Activated CD4-positive, alpha-beta memory T cell treated with anti-CD3 and anti-CD28 coated beads for 36 hours (primary cell): ENCODE measurements at regions of chr1 and their contacts with region 1.

Region 1: GRCh38 chr1:224182866-224183590 is at the start of gene DEGS1:
- DNase-seq: peak; percentile 86
- H3K4me3 Mint-ChIP-seq: peak within 1 kb of the TSS; percentile 81
- H3K27ac Mint-ChIP-seq: peak within 1 kb of the TSS; percentile 90
- H3K4me1 Mint-ChIP-seq: peaks cover 45% of the 10 kb centered on the region
- H3K27me3 Mint-ChIP-seq: no peaks in the 10 kb centered on the region
- total RNA-seq, gene DEGS1: 27.9 to 28.4 TPM

Region 2: DNA sequence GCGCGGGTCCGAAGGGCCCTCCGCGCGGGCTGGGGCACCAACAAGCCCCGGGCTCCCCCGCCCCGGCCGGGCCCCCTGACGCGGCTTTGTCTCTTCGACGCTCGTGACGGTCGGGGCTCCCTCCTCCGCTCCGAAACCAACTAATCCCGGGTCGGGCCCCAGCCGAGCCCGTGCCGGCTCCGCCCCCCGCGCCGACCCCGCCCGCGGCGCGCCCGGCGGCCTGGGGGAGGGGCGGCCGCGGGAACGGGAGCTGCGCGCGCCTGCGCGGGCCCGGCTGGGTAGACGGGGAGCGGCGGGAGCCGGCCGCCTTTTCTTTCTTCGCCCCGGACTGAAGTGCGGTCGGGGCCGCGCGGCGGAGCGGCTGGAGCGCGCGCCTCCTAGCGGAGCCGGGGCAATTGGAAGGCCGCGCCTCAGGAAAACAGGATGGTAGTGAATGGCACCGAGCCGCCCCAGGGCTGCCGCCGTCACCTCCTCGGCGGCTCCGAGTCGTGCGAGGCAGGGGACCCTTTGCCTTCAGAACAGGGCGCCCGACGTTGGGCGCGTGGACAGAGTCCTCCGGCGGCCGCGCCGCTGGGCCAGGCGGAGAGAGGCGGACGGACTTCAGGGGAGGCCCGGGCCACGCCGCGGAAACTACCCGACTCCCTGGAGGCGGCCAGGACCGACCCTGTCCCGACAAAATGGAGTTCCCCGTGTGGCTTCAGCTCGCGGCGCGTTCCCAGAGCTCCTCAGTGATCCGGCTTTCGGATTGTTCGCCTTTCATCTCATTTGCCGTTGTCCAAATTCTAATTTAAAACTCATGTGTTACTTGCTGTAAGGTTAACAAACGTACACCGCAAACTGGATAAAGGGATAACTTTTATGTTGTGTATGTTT is 337.0 kb before region 1 on chr1 and contains the start of gene TP53BP2:
- CTCF ChIA-PET with region 1: no interaction called
- POLR2A ChIA-PET with region 1: interaction called, 3 read pairs
- intact Hi-C with region 1: loop called (anchors 5 kb)
- DNase-seq: peak; percentile 88
- H3K4me3 Mint-ChIP-seq: peak within 1 kb of the TSS; percentile 98
- H3K27ac Mint-ChIP-seq: peak within 1 kb of the TSS; percentile 100
- H3K4me1 Mint-ChIP-seq: peaks cover 45% of the 10 kb centered on the region
- H3K27me3 Mint-ChIP-seq: no peaks in the 10 kb centered on the region
- total RNA-seq, gene TP53BP2: 56.0 to 58.7 TPM

Region 3: GRCh38 chr1:224042557-224043118 is 140.4 kb before region 1 on chr1:
- CTCF ChIA-PET with region 1: no interaction called
- POLR2A ChIA-PET with region 1: no interaction called
- intact Hi-C with region 1: no loop called
- DNase-seq: no peak
- H3K4me3 Mint-ChIP-seq: no peak overlapping the region
- H3K27ac Mint-ChIP-seq: no peak overlapping the region
- H3K4me1 Mint-ChIP-seq: no peaks in the 10 kb centered on the region
- H3K27me3 Mint-ChIP-seq: peaks cover 9% of the 10 kb centered on the region

Region 4: GRCh38 chr1:224113918-224114786 is 68.9 kb before region 1 on chr1 and contains the start of gene FBXO28:
- CTCF ChIA-PET with region 1: no interaction called
- POLR2A ChIA-PET with region 1: no interaction called
- intact Hi-C with region 1: loop called (anchors 1 kb)
- DNase-seq: peak; percentile 97
- H3K4me3 Mint-ChIP-seq: peak within 1 kb of the TSS; percentile 78
- H3K27ac Mint-ChIP-seq: peak within 1 kb of the TSS; percentile 86
- H3K4me1 Mint-ChIP-seq: peaks cover 27% of the 10 kb centered on the region
- H3K27me3 Mint-ChIP-seq: no peaks in the 10 kb centered on the region
- total RNA-seq, gene FBXO28: 19.5 to 20.0 TPM

Region 5: DNA sequence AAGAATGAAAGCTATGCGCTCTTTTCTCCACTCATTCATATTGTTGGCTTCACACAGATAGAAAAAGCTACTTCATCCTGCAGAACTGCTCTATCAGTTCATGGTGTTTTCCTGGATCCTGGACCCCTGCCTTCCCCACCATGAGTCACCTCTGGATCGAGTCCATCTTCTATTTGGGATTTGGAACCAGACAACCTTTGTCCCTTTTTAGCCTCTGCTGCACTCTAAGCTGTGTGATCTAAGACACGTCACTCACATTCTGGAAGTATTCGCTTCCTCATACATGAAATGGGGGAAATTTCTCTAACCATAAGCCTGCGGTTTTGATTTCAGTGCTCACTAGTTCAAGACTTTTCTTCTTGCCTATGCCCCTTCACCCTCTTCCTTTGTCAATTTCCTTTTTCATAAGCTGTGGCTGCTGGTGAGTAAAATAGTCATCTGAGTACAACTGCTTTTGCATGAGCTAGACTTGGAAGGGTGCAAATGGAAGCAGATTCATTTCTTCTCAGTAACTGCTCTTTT is 14.1 kb before region 1 on chr1:
- CTCF ChIA-PET with region 1: interaction called, 6 read pairs
- POLR2A ChIA-PET with region 1: interaction called, 21 read pairs
- intact Hi-C with region 1: loop called (anchors 1 kb)
- DNase-seq: peak; percentile 22
- H3K4me3 Mint-ChIP-seq: peak overlapping the region; percentile 17
- H3K27ac Mint-ChIP-seq: peak overlapping the region; percentile 50
- H3K4me1 Mint-ChIP-seq: peaks cover 30% of the 10 kb centered on the region
- H3K27me3 Mint-ChIP-seq: no peaks in the 10 kb centered on the region

Region 6: GRCh38 chr1:224205438-224205840 is 22.4 kb after region 1 on chr1:
- CTCF ChIA-PET with region 1: no interaction called
- POLR2A ChIA-PET with region 1: no interaction called
- intact Hi-C with region 1: loop called (anchors 1 kb)
- DNase-seq: peak; percentile 68
- H3K4me3 Mint-ChIP-seq: no peak overlapping the region
- H3K27ac Mint-ChIP-seq: no peak overlapping the region
- H3K4me1 Mint-ChIP-seq: peaks cover 11% of the 10 kb centered on the region
- H3K27me3 Mint-ChIP-seq: no peaks in the 10 kb centered on the region

Region 7: GRCh38 chr1:224377676-224378006 is 194.6 kb after region 1 on chr1:
- CTCF ChIA-PET with region 1: no interaction called
- POLR2A ChIA-PET with region 1: interaction called, 3 read pairs
- intact Hi-C with region 1: loop called (anchors 5 kb)
- DNase-seq: peak; percentile 67
- H3K4me3 Mint-ChIP-seq: no peak overlapping the region
- H3K27ac Mint-ChIP-seq: peak overlapping the region; percentile 46
- H3K4me1 Mint-ChIP-seq: peaks cover 91% of the 10 kb centered on the region
- H3K27me3 Mint-ChIP-seq: no peaks in the 10 kb centered on the region

Region 8: GRCh38 chr1:224497714-224498573 is 314.9 kb after region 1 on chr1:
- CTCF ChIA-PET with region 1: no interaction called
- POLR2A ChIA-PET with region 1: no interaction called
- intact Hi-C with region 1: loop called (anchors 2 kb)
- DNase-seq: peak; percentile 87
- H3K4me3 Mint-ChIP-seq: peak overlapping the region; percentile 66
- H3K27ac Mint-ChIP-seq: peak overlapping the region; percentile 87
- H3K4me1 Mint-ChIP-seq: peaks cover 33% of the 10 kb centered on the region
- H3K27me3 Mint-ChIP-seq: no peaks in the 10 kb centered on the region